ENCODE measurements at regions of chr15 and their contacts with region 1.

Region 1: DNA sequence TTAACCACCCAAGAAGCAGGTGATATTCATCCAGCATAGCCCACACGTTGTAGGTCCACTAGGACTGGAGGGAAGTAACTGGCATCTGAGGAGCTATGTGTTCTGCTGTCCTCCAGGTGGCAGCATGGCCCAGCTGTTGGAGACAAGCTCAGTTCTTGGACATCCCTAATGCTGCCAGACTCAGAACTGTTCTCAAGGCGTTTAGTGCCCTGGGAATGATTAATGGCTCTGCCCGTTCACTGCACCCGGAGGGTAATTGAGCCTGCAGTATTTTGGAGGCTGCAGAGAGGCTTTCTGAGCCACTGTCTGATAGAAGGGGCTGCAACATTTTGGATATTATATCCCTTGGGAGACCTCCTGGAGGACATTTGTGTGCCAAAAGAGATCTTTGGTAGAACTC is 521.2 kb upstream of the SEMA6D start:
- DNase-seq: peak; percentile 85
- ATAC-seq: peak; percentile 99
- H3K4me3 ChIP-seq: no peak overlapping the region
- H3K27ac ChIP-seq: no peak overlapping the region
- H3K4me1 ChIP-seq: no peaks in the 10 kb centered on the region
- H3K27me3 ChIP-seq: no peaks in the 10 kb centered on the region
- CTCF ChIP-seq: peak; percentile 80

Region 2: DNA sequence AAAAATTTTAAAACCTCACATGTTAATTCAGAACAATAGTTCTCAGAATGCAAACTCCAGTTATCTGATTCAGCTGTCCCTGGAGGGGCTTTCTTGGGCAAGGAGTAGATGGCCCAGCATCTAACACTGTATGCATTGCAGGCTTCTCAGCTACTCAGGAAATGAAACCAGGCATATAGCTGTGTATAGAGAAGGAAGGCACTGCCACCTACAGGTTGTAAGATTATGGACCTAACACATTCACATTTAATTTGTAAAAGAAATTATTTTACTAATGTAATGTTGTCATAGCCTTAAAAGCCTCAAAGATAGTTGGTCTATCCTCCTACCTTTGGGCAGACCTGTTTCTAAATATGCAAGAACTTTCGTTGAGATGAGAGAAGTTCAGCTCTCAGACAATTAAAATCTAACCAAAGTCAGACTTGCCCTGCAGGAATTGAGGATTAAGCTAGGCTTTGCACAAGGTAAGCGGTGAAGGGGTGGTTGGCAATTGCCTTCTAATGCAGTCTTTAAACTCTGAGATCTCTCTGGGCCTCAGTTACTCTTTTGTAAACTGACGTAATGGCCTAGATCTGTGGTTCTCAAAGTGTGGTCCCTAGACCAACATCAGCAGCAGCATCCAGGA is 792.0 kb after region 1 on chr15:
- intact Hi-C with region 1: loop called (anchors 5 kb)
- DNase-seq: no peak
- ATAC-seq: peak; percentile 92
- H3K4me3 ChIP-seq: no peak overlapping the region
- H3K27ac ChIP-seq: no peak overlapping the region
- H3K4me1 ChIP-seq: no peaks in the 10 kb centered on the region
- H3K27me3 ChIP-seq: no peaks in the 10 kb centered on the region
- CTCF ChIP-seq: peak; percentile 69

Measured in upper lobe of right lung (tissue), 1 donor.